Natural killer cell (primary cell): ENCODE measurements at regions of chr12 and their contacts with region 1.

Region 1: GRCh38 chr12:32679091-32679919 is at the start of gene DNM1L:
- DNase-seq: peak; percentile 89 to 95
- ATAC-seq: peak; percentile 98 to 100 (median 98)
- H3K4me3 ChIP-seq: peak within 1 kb of the TSS; percentile 51
- H3K4me3 Mint-ChIP-seq: peak within 1 kb of the TSS; percentile 94
- H3K27ac ChIP-seq: peak within 1 kb of the TSS; percentile 70
- H3K27ac Mint-ChIP-seq: peak within 1 kb of the TSS; percentile 85 to 92
- H3K4me1 ChIP-seq: peaks cover 6% of the 10 kb centered on the region
- H3K4me1 Mint-ChIP-seq: peaks cover 16 to 21% of the 10 kb centered on the region in 2 donors
- H3K27me3 ChIP-seq: no peaks in the 10 kb centered on the region
- H3K27me3 Mint-ChIP-seq: no peaks in the 10 kb centered on the region
- CTCF ChIP-seq: no peak
- total RNA-seq, gene DNM1L: 69.2 to 84.9 (median 81.0) TPM

Region 2: GRCh38 chr12:32437095-32437515 is 242.2 kb before region 1 on chr12:
- intact Hi-C with region 1: no loop called
- DNase-seq: no peak
- ATAC-seq: no peak
- H3K4me3 ChIP-seq: no peak overlapping the region
- H3K4me3 Mint-ChIP-seq: no peak overlapping the region
- H3K27ac ChIP-seq: no peak overlapping the region
- H3K27ac Mint-ChIP-seq: no peak overlapping the region
- H3K4me1 ChIP-seq: no peaks in the 10 kb centered on the region
- H3K4me1 Mint-ChIP-seq: no peaks in the 10 kb centered on the region
- H3K27me3 ChIP-seq: no peaks in the 10 kb centered on the region
- H3K27me3 Mint-ChIP-seq: peaks cover 0 to 10% of the 10 kb centered on the region in 2 donors
- CTCF ChIP-seq: no peak

Region 3: DNA sequence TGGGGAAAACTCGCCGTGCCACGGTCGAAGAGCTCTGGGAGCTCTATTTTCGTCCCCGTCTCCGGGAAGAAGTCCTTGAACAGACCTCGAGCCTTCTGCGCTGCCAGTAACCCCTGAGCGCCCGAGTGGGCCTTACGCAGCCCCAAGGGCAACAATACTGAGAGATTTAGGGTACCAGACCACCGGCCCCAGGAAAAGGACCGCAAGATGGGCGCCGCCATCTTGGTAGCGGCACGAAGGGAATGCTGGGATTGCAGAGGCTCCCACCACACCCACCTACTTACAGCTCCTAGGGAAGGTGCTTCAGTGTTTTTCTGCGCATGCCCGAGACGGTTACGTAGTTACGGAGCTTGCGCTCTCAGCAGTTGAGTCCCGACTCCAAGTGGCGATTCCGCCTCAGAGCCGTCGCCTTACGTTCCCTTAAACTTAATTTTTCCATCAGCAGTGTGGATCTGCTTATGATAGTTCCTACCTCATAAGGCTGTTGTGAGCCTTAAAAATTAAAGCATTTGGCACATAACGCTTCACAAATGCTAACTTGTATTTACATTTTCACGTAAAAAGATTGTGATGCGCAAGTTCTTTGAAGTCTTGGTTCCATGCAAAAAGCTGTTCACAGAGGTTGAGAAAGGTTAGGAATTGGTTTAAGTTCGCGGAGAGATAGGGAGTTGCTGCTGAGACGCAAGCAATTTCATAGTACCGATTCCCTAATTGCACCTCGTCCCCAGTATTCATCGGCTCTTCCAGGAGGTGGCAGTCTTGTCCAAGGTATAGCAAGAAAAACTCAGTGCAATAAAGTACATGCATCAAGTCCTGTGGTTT is 76.6 kb after region 1 on chr12 and contains the start of gene YARS2:
- intact Hi-C with region 1: loop called (anchors 1 kb)
- DNase-seq: peak; percentile 69 to 97
- ATAC-seq: peak; percentile 77 to 85 (median 80)
- H3K4me3 ChIP-seq: peak within 1 kb of the TSS; percentile 85
- H3K4me3 Mint-ChIP-seq: peak within 1 kb of the TSS; percentile 89
- H3K27ac ChIP-seq: peak within 1 kb of the TSS; percentile 82
- H3K27ac Mint-ChIP-seq: peak within 1 kb of the TSS; percentile 85 to 88
- H3K4me1 ChIP-seq: peaks cover 14% of the 10 kb centered on the region
- H3K4me1 Mint-ChIP-seq: peaks cover 16 to 17% of the 10 kb centered on the region in 2 donors
- H3K27me3 ChIP-seq: no peaks in the 10 kb centered on the region
- H3K27me3 Mint-ChIP-seq: peaks cover 0 to 6% of the 10 kb centered on the region in 2 donors
- CTCF ChIP-seq: peak; percentile 79
- total RNA-seq, gene YARS2: 9.2 to 15.9 (median 9.3) TPM